Activated B cell treated with CpG ODN at 0.5 μM for 24 hours (primary cell): ENCODE measurements at regions of chr11 and their contacts with region 1.

Region 1: GRCh38 chr11:119673759-119674336 is 55.2 kb downstream of the NECTIN1 start:
- DNase-seq: peak; percentile 66
- ATAC-seq: peak; percentile 92
- H3K4me3 Mint-ChIP-seq: peak overlapping the region; percentile 78
- H3K27ac Mint-ChIP-seq: peak overlapping the region; percentile 91
- H3K4me1 Mint-ChIP-seq: peaks cover 31% of the 10 kb centered on the region
- H3K27me3 Mint-ChIP-seq: no peaks in the 10 kb centered on the region
- CTCF ChIP-seq: no peak

Region 2: DNA sequence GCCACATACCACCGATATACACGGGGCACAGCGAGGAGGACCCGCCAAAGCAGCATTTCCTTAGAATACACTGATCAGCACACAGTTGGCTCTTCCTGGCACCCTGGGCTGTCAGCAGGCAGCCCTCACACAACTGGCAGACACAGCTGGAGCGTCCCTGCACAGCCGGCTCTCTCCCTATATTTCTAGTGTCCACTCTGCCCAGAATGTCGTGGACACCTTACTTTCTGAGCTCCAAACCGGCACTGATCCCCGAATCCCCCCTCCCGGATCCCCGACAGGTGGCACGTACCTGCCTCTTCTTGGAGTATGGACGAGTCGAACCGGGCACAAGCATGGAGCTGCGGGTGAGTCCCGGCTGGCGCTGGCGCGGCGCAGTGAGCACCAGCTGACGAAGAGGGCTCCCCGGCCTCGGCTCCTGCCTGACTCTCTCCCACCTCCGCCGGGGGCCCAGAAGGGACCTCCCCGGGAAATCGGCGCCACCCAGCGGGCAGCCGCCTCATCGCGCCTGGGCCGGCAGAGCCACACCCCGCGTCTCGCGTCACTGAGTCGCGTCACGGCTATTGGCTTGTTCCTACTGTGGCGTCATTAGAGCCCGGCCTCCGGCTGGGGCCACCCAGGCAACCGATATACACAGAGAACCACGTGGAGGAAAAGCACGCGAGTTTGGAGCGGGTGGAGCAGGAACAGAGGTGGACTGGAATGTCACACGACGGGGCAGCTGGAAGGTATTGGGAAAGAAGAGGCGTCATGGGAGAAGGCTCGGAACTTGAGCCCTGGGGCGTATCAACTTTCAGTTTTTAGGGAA is 292.5 kb before region 1 on chr11 and contains the start of gene USP2:
- CTCF ChIA-PET with region 1: no interaction called
- POLR2A ChIA-PET with region 1: no interaction called
- intact Hi-C with region 1: loop called (anchors 1 kb)
- DNase-seq: peak; percentile 96
- ATAC-seq: peak; percentile 99
- H3K4me3 Mint-ChIP-seq: no peak within 1 kb of the TSS
- H3K27ac Mint-ChIP-seq: peak within 1 kb of the TSS; percentile 21
- H3K4me1 Mint-ChIP-seq: no peaks in the 10 kb centered on the region
- H3K27me3 Mint-ChIP-seq: peaks cover 3% of the 10 kb centered on the region
- CTCF ChIP-seq: peak; percentile 46
- total RNA-seq, gene USP2: 0.24 TPM in 1 of 2 replicates, not detected in the other

Region 3: DNA sequence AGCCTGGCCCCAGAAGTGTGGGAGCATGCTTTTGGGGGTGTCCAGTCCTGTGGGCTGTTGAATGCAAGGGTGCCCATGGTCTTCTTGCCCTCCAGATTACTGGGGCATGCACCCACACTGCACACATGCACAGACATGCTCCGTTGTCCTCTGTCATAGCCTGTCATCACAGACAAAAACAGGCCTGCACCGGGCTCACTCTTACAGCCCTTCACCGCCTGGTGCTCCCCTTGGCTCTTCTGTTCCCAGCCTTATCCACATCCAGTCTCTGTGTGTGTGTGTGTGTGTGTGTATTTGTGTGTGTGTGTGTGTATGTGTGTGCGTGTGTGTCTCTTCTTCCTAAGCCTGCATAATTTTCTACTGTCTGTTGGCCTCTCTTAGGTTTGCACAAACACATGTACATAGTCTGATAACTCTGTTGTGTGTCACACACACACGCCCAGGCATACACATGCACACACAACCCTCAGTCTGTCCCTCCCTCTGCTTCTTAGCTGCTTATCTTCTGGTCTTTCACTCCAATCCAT is 78.6 kb after region 1 on chr11:
- CTCF ChIA-PET with region 1: interaction called, 6 read pairs
- POLR2A ChIA-PET with region 1: interaction called, 20 read pairs
- intact Hi-C with region 1: loop called (anchors 2 kb)
- DNase-seq: no peak
- ATAC-seq: peak; percentile 73
- H3K4me3 Mint-ChIP-seq: peak overlapping the region; percentile 84
- H3K27ac Mint-ChIP-seq: peak overlapping the region; percentile 94
- H3K4me1 Mint-ChIP-seq: peaks cover 35% of the 10 kb centered on the region
- H3K27me3 Mint-ChIP-seq: peaks cover 4% of the 10 kb centered on the region
- CTCF ChIP-seq: no peak

Region 4: GRCh38 chr11:120079750-120080490 is 406.1 kb after region 1 on chr11:
- CTCF ChIA-PET with region 1: interaction called, 13 read pairs
- POLR2A ChIA-PET with region 1: no interaction called
- intact Hi-C with region 1: no loop called
- DNase-seq: no peak
- ATAC-seq: peak; percentile 45
- H3K4me3 Mint-ChIP-seq: no peak overlapping the region
- H3K27ac Mint-ChIP-seq: no peak overlapping the region
- H3K4me1 Mint-ChIP-seq: no peaks in the 10 kb centered on the region
- H3K27me3 Mint-ChIP-seq: peaks cover 15% of the 10 kb centered on the region
- CTCF ChIP-seq: no peak

Region 5: DNA sequence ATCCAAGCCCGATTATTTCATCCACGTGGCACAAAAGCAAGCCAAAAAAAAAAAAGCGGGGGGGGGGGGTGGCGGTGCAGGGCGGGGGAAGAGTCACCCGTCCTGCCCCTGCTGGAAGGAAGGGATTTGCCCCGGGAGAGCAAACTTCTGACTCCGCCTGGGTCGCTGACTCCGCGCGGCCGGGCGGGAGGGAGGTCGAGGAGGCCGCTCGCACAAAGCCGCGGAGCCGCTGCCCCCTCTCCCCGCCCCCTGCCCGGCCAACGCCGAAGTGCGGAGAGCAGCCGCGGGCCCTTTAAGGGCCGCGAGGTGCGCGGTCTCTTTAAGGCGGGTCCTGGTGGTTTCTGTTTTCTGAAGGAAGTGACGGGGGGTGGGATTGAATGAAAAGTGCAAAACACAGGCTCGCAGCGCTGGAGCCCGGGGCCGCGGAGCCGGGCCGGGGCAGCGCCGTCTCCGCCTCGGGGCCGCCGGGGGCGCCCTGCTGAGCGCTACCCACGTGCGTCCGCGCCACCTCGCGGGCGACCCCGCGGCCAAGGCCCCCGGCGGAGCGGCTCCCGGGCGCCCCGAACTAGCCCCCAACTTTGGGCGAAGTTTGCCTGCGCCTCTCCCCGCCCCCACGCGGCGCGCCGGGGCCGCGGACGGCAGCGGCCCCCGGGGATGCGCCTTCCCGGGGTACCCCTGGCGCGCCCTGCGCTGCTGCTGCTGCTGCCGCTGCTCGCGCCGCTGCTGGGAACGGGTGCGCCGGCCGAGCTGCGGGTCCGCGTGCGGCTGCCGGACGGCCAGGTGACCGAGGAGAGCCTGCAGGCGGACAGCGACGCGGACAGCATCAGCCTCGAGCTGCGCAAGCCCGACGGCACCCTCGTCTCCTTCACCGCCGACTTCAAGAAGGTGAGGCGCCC is 537.0 kb after region 1 on chr11 and contains the start of gene OAF:
- CTCF ChIA-PET with region 1: no interaction called
- POLR2A ChIA-PET with region 1: no interaction called
- intact Hi-C with region 1: loop called (anchors 10 kb)
- DNase-seq: peak; percentile 39
- ATAC-seq: peak; percentile 88
- H3K4me3 Mint-ChIP-seq: peak within 1 kb of the TSS; percentile 87
- H3K27ac Mint-ChIP-seq: peak within 1 kb of the TSS; percentile 39
- H3K4me1 Mint-ChIP-seq: peaks cover 14% of the 10 kb centered on the region
- H3K27me3 Mint-ChIP-seq: peaks cover 32% of the 10 kb centered on the region
- CTCF ChIP-seq: no peak
- total RNA-seq, gene OAF: 0.78 and 0.98 TPM in 2 replicates